Posterior vena cava (tissue), 2 donors: ENCODE measurements at regions of chr18 and their contacts with region 1.

Region 1: GRCh38 chr18:30113454-30113853 is 929.1 kb downstream of the DSC3 start:
- DNase-seq: no peak

Region 2: GRCh38 chr18:30150586-30151250 is 37.3 kb after region 1 on chr18:
- intact Hi-C with region 1: loop called in 1 of 2 experiments (anchors 1 kb)
- DNase-seq: no peak